ENCODE measurements at regions of chr5 and their contacts with region 1.

Region 1: DNA sequence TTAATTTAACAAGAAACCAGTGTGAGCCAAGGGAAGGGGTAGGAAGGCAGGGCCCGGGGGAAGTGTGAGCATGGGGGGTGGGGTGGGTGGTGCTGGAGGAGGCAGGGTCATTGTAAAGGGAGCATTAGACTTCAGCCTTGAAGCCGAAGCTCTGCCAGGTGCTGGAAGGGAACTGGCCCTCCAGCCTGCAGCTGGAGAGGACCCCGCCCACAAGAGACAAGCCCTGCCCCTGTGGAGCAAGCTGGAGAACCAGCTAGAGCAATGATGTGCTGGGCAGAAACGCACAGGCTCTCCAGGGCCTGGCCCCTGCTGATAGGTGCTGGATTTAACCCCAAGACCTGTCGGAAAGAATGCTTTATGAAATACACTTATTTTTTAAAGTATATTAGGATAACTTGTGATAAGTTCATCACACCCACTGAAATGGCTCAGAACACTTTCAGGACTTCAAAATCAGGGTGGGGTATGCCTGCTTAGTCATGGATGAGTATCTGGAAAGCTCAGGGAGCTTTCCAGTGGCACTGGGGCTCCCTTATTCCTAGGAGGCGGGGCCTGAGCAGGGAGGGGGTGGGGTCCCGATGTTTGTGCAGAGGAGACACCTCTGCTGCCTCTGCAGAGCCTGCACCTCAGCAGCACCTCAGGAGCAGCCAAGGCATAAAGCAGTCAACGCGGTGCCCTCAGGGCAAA is 27.1 kb downstream of the UBE2QL1 start:
- DNase-seq: no peak
- H3K4me3 Mint-ChIP-seq: no peak overlapping the region
- H3K27ac Mint-ChIP-seq: no peak overlapping the region
- H3K4me1 Mint-ChIP-seq: no peaks in the 10 kb centered on the region
- H3K27me3 Mint-ChIP-seq: peaks cover 17% of the 10 kb centered on the region
- CTCF ChIP-seq: no peak

Region 2: GRCh38 chr5:6872441-6873160 is 396.8 kb after region 1 on chr5:
- CTCF ChIA-PET with region 1: no interaction called
- POLR2A ChIA-PET with region 1: no interaction called
- intact Hi-C with region 1: loop called (anchors 5 kb)
- DNase-seq: no peak
- H3K4me3 Mint-ChIP-seq: no peak overlapping the region
- H3K27ac Mint-ChIP-seq: no peak overlapping the region
- H3K4me1 Mint-ChIP-seq: no peaks in the 10 kb centered on the region
- H3K27me3 Mint-ChIP-seq: peaks cover 9% of the 10 kb centered on the region
- CTCF ChIP-seq: no peak

Measured in MCF 10A (cell line).